Activated CD8-positive, alpha-beta T cell treated with anti-CD3 and anti-CD28 coated beads, Interleukin-2, amount 10 ng/mL, durations not matched to agents 7 days and 5 days (primary cell): ENCODE measurements at regions of chr1 and their contacts with region 1.

Region 1: DNA sequence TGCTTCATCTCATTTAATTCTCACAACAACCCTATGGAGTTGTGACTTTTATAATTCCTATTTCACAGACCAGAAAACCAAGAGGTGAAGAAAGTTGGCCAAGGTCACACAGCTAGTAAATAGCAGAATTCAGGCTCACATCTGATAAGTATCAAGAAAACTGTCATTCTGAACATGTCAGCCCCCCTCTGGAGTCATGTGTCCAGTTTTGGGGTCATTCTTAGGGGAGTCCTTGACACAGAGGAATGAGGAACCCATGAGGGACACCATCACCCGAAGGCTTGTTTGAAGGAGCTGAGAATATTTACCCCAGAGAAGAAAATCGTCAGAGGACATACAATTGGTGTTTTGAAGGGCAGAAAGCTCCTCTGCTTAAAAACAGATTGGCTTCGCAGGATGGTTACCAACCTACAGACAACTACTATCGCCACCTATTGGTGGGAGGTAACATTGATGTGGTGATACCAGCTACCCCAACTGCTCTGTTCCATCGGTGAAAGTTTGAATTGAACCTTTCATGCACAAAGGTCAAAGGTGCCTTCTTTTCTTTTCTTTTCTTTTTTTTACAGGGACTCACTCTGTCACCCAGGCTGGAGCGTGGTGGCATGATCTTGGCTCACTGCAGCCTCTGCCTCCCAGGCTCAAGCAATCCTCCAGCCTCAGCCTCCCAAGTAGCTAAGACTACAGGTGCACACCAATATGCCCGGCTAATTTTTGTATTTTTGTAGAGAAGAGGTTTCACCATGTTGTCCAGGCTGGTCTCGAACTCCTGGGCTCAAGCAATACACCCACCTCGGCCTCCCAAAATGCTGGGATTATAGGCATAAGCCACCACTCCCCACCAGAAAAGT is 31.3 kb downstream of the NCMAP start:
- DNase-seq: peak; percentile 75
- ATAC-seq: peak; percentile 97
- H3K4me3 Mint-ChIP-seq: no peak overlapping the region
- H3K27ac Mint-ChIP-seq: no peak overlapping the region
- H3K4me1 Mint-ChIP-seq: peaks cover 13% of the 10 kb centered on the region
- H3K27me3 Mint-ChIP-seq: peaks cover 14% of the 10 kb centered on the region

Region 2: DNA sequence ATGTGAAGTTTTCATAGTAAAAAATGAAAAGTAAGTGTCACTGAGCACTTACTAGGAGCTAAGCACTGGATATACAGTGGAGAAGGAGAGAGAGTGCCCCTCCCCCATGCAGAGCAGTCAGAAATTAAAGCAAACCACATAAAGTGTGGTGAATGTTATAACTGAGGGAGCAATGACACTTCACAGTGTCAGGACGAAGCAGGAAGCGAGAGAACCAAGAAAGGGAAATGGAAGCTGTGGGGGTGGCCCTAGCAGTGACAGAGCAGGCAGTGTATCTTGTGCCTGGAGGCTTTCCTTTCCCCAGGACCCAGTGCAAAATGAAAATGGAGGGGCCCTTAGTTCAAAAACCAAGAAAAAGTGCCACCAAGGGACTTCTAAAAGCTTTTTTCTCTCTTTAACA is 106.1 kb before region 1 on chr1:
- CTCF ChIA-PET with region 1: interaction called, 10 read pairs
- POLR2A ChIA-PET with region 1: interaction called, 4 read pairs
- DNase-seq: peak; percentile 70
- ATAC-seq: peak; percentile 78
- H3K4me3 Mint-ChIP-seq: peak overlapping the region; percentile 54
- H3K27ac Mint-ChIP-seq: peak overlapping the region; percentile 97
- H3K4me1 Mint-ChIP-seq: peaks cover 56% of the 10 kb centered on the region
- H3K27me3 Mint-ChIP-seq: no peaks in the 10 kb centered on the region

Region 3: GRCh38 chr1:24502709-24503058 is 84.5 kb before region 1 on chr1 and contains the start of gene RCAN3:
- CTCF ChIA-PET with region 1: interaction called, 20 read pairs
- POLR2A ChIA-PET with region 1: interaction called, 6 read pairs
- DNase-seq: peak; percentile 93
- ATAC-seq: peak; percentile 81
- H3K4me3 Mint-ChIP-seq: peak within 1 kb of the TSS; percentile 94
- H3K27ac Mint-ChIP-seq: peak within 1 kb of the TSS; percentile 97
- H3K4me1 Mint-ChIP-seq: peaks cover 65% of the 10 kb centered on the region
- H3K27me3 Mint-ChIP-seq: no peaks in the 10 kb centered on the region
- total RNA-seq, gene RCAN3: 63.7 to 65.6 TPM

Region 4: GRCh38 chr1:24536391-24536840 is 50.8 kb before region 1 on chr1:
- CTCF ChIA-PET with region 1: interaction called, 72 read pairs
- POLR2A ChIA-PET with region 1: no interaction called
- DNase-seq: peak; percentile 77
- ATAC-seq: peak; percentile 59
- H3K4me3 Mint-ChIP-seq: peak overlapping the region; percentile 84
- H3K27ac Mint-ChIP-seq: peak overlapping the region; percentile 97
- H3K4me1 Mint-ChIP-seq: peaks cover 77% of the 10 kb centered on the region
- H3K27me3 Mint-ChIP-seq: no peaks in the 10 kb centered on the region

Region 5: DNA sequence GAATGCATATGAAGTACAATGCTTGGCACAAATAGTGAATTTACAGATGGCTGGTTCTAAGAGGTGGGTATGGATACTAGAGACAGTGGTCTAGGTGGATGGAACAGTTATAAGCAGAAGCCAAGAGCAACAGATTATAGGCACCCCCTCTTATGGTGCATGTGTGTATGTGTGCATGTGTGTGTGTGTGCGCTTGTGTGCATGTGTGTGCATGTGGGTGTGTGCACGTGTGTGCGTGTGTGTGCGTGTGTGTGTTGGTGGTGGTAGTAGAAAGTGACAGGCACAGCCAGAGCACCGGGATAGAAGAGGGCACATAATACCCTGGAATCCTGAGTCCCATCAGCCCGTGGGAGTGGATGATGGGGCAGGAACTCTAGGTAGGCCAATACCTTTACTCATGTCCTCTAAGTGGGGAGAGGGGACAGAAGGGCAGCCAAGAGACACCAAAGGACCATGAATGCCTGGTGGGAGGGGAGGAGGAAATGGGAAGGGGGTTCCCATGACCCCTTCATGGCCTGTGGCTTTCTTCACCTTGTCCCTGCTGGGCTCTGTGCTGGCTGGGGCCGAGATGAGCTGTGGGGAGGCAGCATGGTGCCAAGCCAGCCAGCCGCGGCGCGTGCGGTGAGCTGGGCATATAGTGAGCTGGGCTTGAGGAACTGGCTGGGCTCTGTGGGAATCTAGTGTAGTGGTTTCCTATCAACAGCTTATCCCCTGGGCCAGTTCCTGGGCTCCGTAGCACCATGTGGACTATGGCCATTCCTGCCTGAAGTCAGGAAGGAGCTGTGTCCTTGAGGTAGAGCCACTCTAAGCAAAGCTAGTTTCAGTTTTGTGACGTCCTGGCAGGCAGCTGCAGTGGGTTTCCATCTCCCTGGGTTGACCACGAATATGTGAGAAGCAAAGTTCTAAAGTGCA is 29.7 kb before region 1 on chr1:
- CTCF ChIA-PET with region 1: interaction called, 17 read pairs
- POLR2A ChIA-PET with region 1: no interaction called
- DNase-seq: no peak
- ATAC-seq: peak; percentile 43
- H3K4me3 Mint-ChIP-seq: no peak overlapping the region
- H3K27ac Mint-ChIP-seq: no peak overlapping the region
- H3K4me1 Mint-ChIP-seq: peaks cover 15% of the 10 kb centered on the region
- H3K27me3 Mint-ChIP-seq: peaks cover 42% of the 10 kb centered on the region

Region 6: GRCh38 chr1:24567792-24568388 is 19.3 kb before region 1 on chr1:
- CTCF ChIA-PET with region 1: interaction called, 17 read pairs
- POLR2A ChIA-PET with region 1: no interaction called
- DNase-seq: no peak
- ATAC-seq: no peak
- H3K4me3 Mint-ChIP-seq: no peak overlapping the region
- H3K27ac Mint-ChIP-seq: no peak overlapping the region
- H3K4me1 Mint-ChIP-seq: peaks cover 17% of the 10 kb centered on the region
- H3K27me3 Mint-ChIP-seq: peaks cover 8% of the 10 kb centered on the region

Region 7: DNA sequence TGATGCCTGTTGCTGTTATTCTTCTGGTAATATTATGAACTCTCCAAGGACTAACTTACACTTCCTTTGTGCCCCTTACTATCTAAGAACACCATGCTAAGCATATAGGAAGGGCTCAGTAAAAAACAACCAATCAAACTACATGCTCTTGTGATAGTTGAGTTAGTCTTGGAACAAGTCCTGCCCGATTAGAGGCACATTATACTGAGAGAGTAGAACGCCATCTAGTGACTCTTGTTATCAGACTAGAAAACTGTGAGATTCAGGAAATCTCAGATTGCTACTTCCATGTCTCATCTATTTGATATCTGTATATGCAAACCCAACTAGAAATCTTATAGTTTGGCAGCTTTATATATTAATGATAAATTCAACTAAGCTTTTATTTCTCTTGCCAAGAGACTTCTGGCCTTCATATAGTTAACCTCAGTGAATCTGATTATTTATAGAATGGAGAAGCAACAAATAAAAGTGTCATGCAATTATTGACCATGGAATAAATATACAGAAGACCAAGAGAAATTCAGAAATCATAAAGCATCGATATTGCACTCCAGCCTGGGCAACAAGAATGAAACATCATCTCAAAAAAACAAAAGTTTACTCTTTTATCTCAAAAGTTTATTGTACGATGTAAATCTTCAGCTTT is 48.1 kb after region 1 on chr1:
- CTCF ChIA-PET with region 1: interaction called, 19 read pairs
- POLR2A ChIA-PET with region 1: no interaction called
- DNase-seq: no peak
- ATAC-seq: peak; percentile 84
- H3K4me3 Mint-ChIP-seq: no peak overlapping the region
- H3K27ac Mint-ChIP-seq: no peak overlapping the region
- H3K4me1 Mint-ChIP-seq: peaks cover 5% of the 10 kb centered on the region
- H3K27me3 Mint-ChIP-seq: peaks cover 14% of the 10 kb centered on the region

Region 8: DNA sequence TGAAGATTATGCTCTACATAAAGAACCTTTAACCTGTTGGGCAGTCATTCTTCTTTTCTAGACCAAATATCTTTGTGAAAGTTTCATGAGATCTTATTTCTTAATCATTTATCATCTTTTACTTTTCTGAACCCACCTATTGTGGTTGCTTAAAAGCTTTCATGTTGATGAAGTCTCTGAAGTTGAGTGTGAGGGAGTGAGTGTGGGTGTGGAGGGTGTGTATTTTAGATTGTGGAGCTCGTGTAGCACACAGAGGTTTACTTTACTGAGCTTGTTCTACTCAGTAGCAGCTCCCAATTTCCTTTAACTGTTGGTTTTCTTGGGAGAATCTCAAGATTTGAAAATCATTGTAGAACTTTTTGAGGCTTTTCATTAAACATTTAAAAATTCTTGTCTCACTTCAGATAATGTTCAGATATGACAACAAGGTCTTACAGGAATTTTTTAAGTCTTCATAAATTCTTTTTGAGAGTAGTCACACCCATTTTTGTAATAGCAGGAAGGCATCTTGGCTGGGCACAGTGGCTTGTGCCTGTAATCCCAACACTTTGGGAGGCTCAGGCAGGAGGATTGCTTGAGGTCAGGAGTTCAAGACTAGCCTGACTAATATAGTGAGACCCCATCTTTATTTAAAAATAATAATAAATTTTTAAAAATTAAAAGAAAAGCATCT is 72.9 kb after region 1 on chr1:
- CTCF ChIA-PET with region 1: no interaction called
- POLR2A ChIA-PET with region 1: no interaction called
- DNase-seq: no peak
- ATAC-seq: no peak
- H3K4me3 Mint-ChIP-seq: no peak overlapping the region
- H3K27ac Mint-ChIP-seq: peak overlapping the region; percentile 66
- H3K4me1 Mint-ChIP-seq: peaks cover 19% of the 10 kb centered on the region
- H3K27me3 Mint-ChIP-seq: no peaks in the 10 kb centered on the region